ENCODE measurements at regions of chr12 and their contacts with region 1.

Region 1: DNA sequence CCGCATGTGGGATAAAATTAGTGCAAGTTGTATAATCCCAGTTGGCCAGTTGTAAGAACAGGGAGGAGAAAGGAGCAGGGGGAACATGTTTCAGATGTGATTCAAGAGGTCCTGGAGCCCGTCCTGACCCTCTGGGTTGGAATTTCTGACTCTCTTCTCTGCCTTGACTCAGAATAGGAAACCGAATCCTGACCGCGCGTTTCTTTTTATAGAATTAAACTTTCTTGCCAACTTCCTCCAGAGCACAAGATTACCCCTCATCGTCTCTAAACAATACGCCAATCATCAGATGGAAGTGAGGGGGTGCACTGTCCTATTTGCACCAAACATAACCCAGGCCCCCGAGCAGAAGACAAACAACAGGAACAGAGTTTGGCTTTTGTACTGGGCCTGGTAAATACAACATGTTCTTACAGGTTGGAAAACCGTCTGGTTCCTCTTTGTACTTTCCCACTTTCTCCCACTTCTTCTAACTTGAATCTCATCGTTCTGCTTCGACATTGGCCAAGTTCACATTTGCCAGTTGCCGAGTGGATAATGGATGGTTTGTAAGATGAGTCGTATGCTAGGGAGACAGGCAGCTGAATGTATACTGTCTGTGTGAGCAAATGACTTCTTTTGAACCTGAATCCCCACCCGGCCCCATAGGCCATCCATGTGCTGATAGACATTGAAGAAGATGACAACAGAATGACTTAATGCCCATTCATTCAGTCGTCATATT is 42.6 kb upstream of the MED13L start:
- DNase-seq: peak in 4 of 5 donors; percentile 61 to 75 (median 68)
- ATAC-seq: peak; percentile 90 to 97 (median 95)
- H3K4me3 ChIP-seq: peak overlapping the region in 6 of 12 donors; percentile 2 to 35 (median 12)
- H3K27ac ChIP-seq: peak overlapping the region; percentile 11 to 85 (median 66)
- H3K4me1 ChIP-seq: peaks cover 6 to 49% (median 24%) of the 10 kb centered on the region in 12 donors
- H3K27me3 ChIP-seq: no peaks in the 10 kb centered on the region
- CTCF ChIP-seq: no peak
- POLR2A ChIP-seq: no peak

Region 2: GRCh38 chr12:116416166-116416565 is 96.1 kb after region 1 on chr12:
- intact Hi-C with region 1: loop called in 1 of 10 experiments (anchors 10 kb)
- DNase-seq: no peak
- ATAC-seq: no peak
- H3K4me3 ChIP-seq: no peak overlapping the region
- H3K27ac ChIP-seq: no peak overlapping the region
- H3K4me1 ChIP-seq: peaks cover 0 to 9% (median 0%) of the 10 kb centered on the region in 12 donors
- H3K27me3 ChIP-seq: no peaks in the 10 kb centered on the region
- CTCF ChIP-seq: no peak
- POLR2A ChIP-seq: no peak

Measured in heart left ventricle (tissue), 16 donors.